Activated B cell treated with CpG ODN at 0.5 μM for 24 hours (primary cell): ENCODE measurements at regions of chr12 and their contacts with region 1.

Region 1: GRCh38 chr12:47705566-47706425 is at the start of gene RPAP3:
- DNase-seq: peak; percentile 96
- ATAC-seq: peak; percentile 90
- H3K4me3 Mint-ChIP-seq: peak within 1 kb of the TSS; percentile 97
- H3K27ac Mint-ChIP-seq: peak within 1 kb of the TSS; percentile 98
- H3K4me1 Mint-ChIP-seq: peaks cover 76% of the 10 kb centered on the region
- H3K27me3 Mint-ChIP-seq: no peaks in the 10 kb centered on the region
- CTCF ChIP-seq: no peak
- total RNA-seq, gene RPAP3: 58.4 and 60.5 TPM in 2 replicates

Region 2: GRCh38 chr12:45745861-45746277 is 1959.9 kb before region 1 on chr12:
- CTCF ChIA-PET with region 1: no interaction called
- POLR2A ChIA-PET with region 1: no interaction called
- intact Hi-C with region 1: no loop called
- DNase-seq: no peak
- ATAC-seq: peak; percentile 52
- H3K4me3 Mint-ChIP-seq: no peak overlapping the region
- H3K27ac Mint-ChIP-seq: no peak overlapping the region
- H3K4me1 Mint-ChIP-seq: peaks cover 16% of the 10 kb centered on the region
- H3K27me3 Mint-ChIP-seq: no peaks in the 10 kb centered on the region
- CTCF ChIP-seq: no peak

Region 3: GRCh38 chr12:46268590-46269558 is 1436.9 kb before region 1 on chr12 and contains the start of gene SLC38A1:
- CTCF ChIA-PET with region 1: no interaction called
- POLR2A ChIA-PET with region 1: interaction called, 4 read pairs
- intact Hi-C with region 1: loop called (anchors 5 kb)
- DNase-seq: peak; percentile 77
- ATAC-seq: peak; percentile 71
- H3K4me3 Mint-ChIP-seq: no peak within 1 kb of the TSS
- H3K27ac Mint-ChIP-seq: no peak within 1 kb of the TSS
- H3K4me1 Mint-ChIP-seq: peaks cover 22% of the 10 kb centered on the region
- H3K27me3 Mint-ChIP-seq: no peaks in the 10 kb centered on the region
- CTCF ChIP-seq: no peak
- total RNA-seq, gene SLC38A1: 283 and 314 TPM in 2 replicates

Region 4: GRCh38 chr12:47307680-47308399 is 398.0 kb before region 1 on chr12:
- CTCF ChIA-PET with region 1: no interaction called
- POLR2A ChIA-PET with region 1: no interaction called
- intact Hi-C with region 1: loop called (anchors 5 kb)
- DNase-seq: peak; percentile 33
- ATAC-seq: peak; percentile 88
- H3K4me3 Mint-ChIP-seq: peak overlapping the region; percentile 95
- H3K27ac Mint-ChIP-seq: peak overlapping the region; percentile 94
- H3K4me1 Mint-ChIP-seq: peaks cover 67% of the 10 kb centered on the region
- H3K27me3 Mint-ChIP-seq: no peaks in the 10 kb centered on the region
- CTCF ChIP-seq: peak; percentile 36

Region 5: GRCh38 chr12:47742253-47742825 is 36.5 kb after region 1 on chr12:
- CTCF ChIA-PET with region 1: interaction called, 20 read pairs
- POLR2A ChIA-PET with region 1: interaction called, 7 read pairs
- intact Hi-C with region 1: loop called (anchors 2 kb)
- DNase-seq: peak; percentile 71
- ATAC-seq: peak; percentile 20
- H3K4me3 Mint-ChIP-seq: no peak overlapping the region
- H3K27ac Mint-ChIP-seq: peak overlapping the region; percentile 1
- H3K4me1 Mint-ChIP-seq: peaks cover 73% of the 10 kb centered on the region
- H3K27me3 Mint-ChIP-seq: no peaks in the 10 kb centered on the region
- CTCF ChIP-seq: no peak

Region 6: GRCh38 chr12:47819896-47820630 is 114.3 kb after region 1 on chr12 and contains the start of gene HDAC7:
- CTCF ChIA-PET with region 1: no interaction called
- POLR2A ChIA-PET with region 1: interaction called, 10 read pairs
- intact Hi-C with region 1: no loop called
- DNase-seq: peak; percentile 57
- ATAC-seq: peak; percentile 76
- H3K4me3 Mint-ChIP-seq: peak within 1 kb of the TSS; percentile 89
- H3K27ac Mint-ChIP-seq: peak within 1 kb of the TSS; percentile 93
- H3K4me1 Mint-ChIP-seq: peaks cover 65% of the 10 kb centered on the region
- H3K27me3 Mint-ChIP-seq: no peaks in the 10 kb centered on the region
- CTCF ChIP-seq: no peak
- total RNA-seq, gene HDAC7: 103 and 126 TPM in 2 replicates

Region 7: GRCh38 chr12:48197971-48198671 is 492.3 kb after region 1 on chr12:
- CTCF ChIA-PET with region 1: no interaction called
- POLR2A ChIA-PET with region 1: no interaction called
- intact Hi-C with region 1: loop called (anchors 1 kb)
- DNase-seq: peak; percentile 84
- ATAC-seq: peak; percentile 98
- H3K4me3 Mint-ChIP-seq: peak overlapping the region; percentile 96
- H3K27ac Mint-ChIP-seq: peak overlapping the region; percentile 99
- H3K4me1 Mint-ChIP-seq: peaks cover 26% of the 10 kb centered on the region
- H3K27me3 Mint-ChIP-seq: peaks cover 17% of the 10 kb centered on the region
- CTCF ChIP-seq: no peak